ENCODE measurements at regions of chr12 and their contacts with region 1.

Region 1: GRCh38 chr12:123436017-123436964 is at the start of gene RILPL2:
- DNase-seq: peak; percentile 86
- ATAC-seq: peak; percentile 84
- H3K4me3 ChIP-seq: peak within 1 kb of the TSS; percentile 82
- H3K27ac ChIP-seq: peak within 1 kb of the TSS; percentile 95
- H3K4me1 ChIP-seq: peaks cover 2% of the 10 kb centered on the region; the same call in 1 of the 2 replicates
- H3K27me3 ChIP-seq: no peaks in the 10 kb centered on the region
- CTCF ChIP-seq: no peak
- EP300 ChIP-seq: no peak; a peak in 1 of 4 replicates
- POLR2A ChIP-seq: peak; percentile 81
- RAD21 ChIP-seq: no peak; the same call in 1 of the 2 replicates
- polyA plus RNA-seq, gene RILPL2: 3.5 to 8.3 TPM

Region 2: GRCh38 chr12:123388177-123388947 is 47.9 kb before region 1 on chr12:
- CTCF ChIA-PET with region 1: no interaction called
- POLR2A ChIA-PET with region 1: interaction called, 9 read pairs
- RAD21 ChIA-PET with region 1: interaction called, 6 read pairs
- SMC1A ChIA-PET with region 1: interaction called, 7 read pairs
- in situ Hi-C with region 1: no loop called
- intact Hi-C with region 1: loop called (anchors 5 kb)
- DNase-seq: peak; percentile 21
- ATAC-seq: peak; percentile 52
- H3K4me3 ChIP-seq: peak overlapping the region; percentile 98
- H3K27ac ChIP-seq: peak overlapping the region; percentile 66
- H3K4me1 ChIP-seq: peaks cover 20% of the 10 kb centered on the region
- H3K27me3 ChIP-seq: no peaks in the 10 kb centered on the region
- CTCF ChIP-seq: 0 out of 6 replicates have a peak, but pooled peaks of 1 of the 3 experiments have one; percentile 13
- EP300 ChIP-seq: 0 out of 4 replicates have a peak, but pooled peaks of 1 of the 2 experiments have one; percentile 10
- POLR2A ChIP-seq: no peak
- RAD21 ChIP-seq: no peak